Sigmoid colon (tissue), 7 donors: ENCODE measurements at regions of chr12 and their contacts with region 1.

Region 1: GRCh38 chr12:122064025-122064777 is 14.4 kb upstream of the MLXIP start:
- DNase-seq: peak; percentile 99
- H3K4me3 ChIP-seq: peak overlapping the region; percentile 9 to 43 (median 30)
- H3K27ac ChIP-seq: peak overlapping the region; percentile 78 to 96 (median 93)
- H3K4me1 ChIP-seq: peaks cover 0 to 99% (median 94%) of the 10 kb centered on the region in 4 donors
- H3K27me3 ChIP-seq: no peaks in the 10 kb centered on the region
- CTCF ChIP-seq: peak in 2 of 4 experiments; percentile 61 to 62
- EP300 ChIP-seq: peak in 3 of 4 donors; percentile 53 to 77 (median 64)
- POLR2A ChIP-seq: no peak

Region 2: DNA sequence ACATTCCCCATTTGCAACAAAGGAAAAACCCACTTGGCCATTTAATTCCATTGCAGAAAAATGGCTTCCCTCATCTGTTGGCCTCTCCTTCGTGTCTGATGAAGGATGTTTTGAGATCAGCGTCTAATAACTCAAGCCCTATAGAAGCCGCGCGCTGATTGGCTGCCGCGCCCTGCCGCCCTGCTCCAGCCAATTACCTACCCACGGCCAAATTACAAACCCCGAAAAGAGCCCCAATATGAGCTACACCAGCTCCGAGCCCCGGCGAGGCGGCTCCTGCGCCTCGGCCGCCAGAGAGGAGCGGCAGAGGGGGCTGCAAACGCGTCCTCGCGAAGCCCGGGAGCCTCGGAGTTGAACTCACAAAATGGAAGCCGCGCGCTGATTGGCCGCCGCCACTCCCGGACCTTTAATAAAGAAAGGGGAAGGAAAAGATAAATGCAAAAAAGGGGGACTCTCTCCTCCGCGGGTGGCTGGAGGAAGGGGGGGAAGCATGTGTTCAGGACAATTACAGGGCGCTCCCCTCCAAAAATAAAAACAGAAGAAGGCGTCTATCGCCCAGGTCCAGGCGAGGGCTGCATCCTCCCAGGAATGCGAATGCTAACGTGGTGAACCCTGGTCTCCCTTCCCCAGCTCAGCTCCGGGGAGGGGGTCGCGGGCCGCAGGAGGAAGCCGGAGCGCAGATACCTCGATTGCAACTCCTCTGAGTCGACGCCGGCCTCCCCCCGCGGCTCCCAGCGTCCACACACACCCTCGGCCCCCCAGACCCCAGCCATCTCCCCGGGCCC is 261.2 kb before region 1 on chr12:
- intact Hi-C with region 1: loop called (anchors 10 kb)
- DNase-seq: peak; percentile 96
- H3K4me3 ChIP-seq: peak overlapping the region; percentile 63 to 81 (median 78)
- H3K27ac ChIP-seq: peak overlapping the region; percentile 100
- H3K4me1 ChIP-seq: peaks cover 0 to 50% (median 46%) of the 10 kb centered on the region in 4 donors
- H3K27me3 ChIP-seq: no peaks in the 10 kb centered on the region
- CTCF ChIP-seq: no peak
- EP300 ChIP-seq: no peak
- POLR2A ChIP-seq: peak; percentile 97 to 99

Region 3: DNA sequence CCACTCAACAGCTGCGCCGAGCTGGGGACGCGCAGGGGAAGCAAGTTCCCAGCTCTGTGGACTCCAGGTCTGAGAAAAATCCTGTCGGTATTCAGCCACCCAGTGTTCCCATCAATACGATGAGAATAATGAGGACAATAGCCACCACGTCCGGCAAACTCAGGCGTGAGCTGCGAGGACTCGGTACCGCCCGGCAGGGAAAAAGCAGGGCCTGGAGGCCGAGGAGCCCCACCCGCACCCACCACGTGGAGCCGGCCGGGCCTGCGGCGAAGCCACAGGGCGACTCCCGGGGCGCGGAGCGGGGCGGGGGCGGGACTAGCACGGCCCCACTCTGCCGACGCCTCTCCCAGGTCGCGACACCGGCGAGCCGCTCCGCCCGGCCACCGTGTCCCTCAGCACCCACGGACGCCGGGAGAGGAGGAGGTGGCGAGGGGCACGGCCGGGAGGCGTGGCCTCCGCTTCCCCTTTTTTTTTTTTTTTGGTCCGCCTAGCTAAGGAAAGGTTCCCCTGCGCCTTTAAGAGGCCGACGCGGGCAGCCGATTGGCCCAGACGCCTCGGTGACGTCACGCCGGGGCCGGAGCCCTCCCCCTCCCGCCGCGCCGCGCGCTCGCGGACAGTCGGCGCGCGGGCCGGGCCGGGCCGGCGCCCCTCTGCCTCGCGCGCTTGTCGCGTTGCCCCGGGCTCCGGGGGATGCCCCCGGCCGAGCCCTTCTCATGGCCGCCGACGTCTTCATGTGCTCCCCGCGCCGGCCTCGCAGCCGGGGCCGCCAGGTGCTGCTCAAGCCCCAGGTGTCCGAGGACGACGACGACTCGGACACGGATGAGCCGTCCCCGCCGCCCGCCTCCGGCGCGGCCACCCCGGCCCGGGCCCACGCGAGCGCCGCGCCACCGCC is 14.2 kb after region 1 on chr12 and contains the start of gene MLXIP:
- intact Hi-C with region 1: loop called (anchors 2 kb)
- DNase-seq: peak; percentile 98
- H3K4me3 ChIP-seq: peak within 1 kb of the TSS; percentile 77 to 94 (median 90)
- H3K27ac ChIP-seq: peak within 1 kb of the TSS; percentile 87 to 96 (median 90)
- H3K4me1 ChIP-seq: peaks cover 0 to 57% (median 37%) of the 10 kb centered on the region in 4 donors
- H3K27me3 ChIP-seq: no peaks in the 10 kb centered on the region
- CTCF ChIP-seq: no peak
- EP300 ChIP-seq: no peak
- POLR2A ChIP-seq: peak; percentile 18 to 61
- total RNA-seq, gene MLXIP: 32.9 to 87.5 (median 57.3) TPM

Region 4: DNA sequence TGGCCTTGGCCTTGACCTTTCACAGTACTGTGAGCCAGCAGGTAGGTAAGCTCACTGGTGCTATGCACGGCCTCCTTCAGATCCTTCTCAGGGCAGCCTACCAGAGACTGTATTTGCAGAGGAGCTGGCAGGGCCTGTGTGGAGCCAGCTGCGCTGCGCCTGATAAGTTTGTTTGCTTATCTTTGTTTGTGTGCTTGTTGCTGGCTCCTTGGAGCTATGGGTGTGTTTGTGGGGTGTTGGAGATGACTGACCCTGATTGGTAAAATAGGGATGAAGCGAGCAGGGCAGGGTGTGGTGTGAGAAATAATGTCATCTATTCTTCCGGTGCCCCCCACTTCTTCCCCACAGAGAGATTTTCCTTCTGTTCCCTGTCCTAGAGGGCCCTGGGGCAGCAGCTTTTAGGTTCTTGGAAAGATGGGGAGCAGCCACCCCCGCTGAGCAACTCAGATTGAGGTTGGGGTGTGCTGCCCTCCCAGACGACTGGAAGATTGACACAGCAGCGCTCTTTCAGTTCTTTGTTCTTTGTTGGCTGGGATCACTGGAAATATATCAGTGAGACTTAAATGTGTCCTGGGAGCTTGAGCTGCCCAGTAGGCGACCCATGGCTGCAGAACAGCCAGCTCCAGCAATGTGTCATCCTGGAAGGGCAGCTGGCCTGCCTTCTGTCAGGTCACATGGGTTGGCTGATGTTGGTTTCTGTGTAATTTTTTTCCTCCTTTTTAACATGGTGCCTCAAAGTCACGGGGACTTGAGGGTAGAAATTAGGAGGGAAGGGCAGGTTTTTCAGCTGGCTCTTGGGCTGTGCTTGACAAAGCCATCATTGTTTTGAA is 33.9 kb after region 1 on chr12:
- intact Hi-C with region 1: loop called (anchors 5 kb)
- DNase-seq: peak; percentile 91
- H3K4me3 ChIP-seq: peak overlapping the region in 1 of 4 donors; percentile 18
- H3K27ac ChIP-seq: peak overlapping the region; percentile 77 to 92 (median 86)
- H3K4me1 ChIP-seq: peaks cover 0 to 96% (median 94%) of the 10 kb centered on the region in 4 donors
- H3K27me3 ChIP-seq: no peaks in the 10 kb centered on the region
- CTCF ChIP-seq: no peak
- EP300 ChIP-seq: peak in 1 of 4 donors; percentile 32
- POLR2A ChIP-seq: no peak

Region 5: DNA sequence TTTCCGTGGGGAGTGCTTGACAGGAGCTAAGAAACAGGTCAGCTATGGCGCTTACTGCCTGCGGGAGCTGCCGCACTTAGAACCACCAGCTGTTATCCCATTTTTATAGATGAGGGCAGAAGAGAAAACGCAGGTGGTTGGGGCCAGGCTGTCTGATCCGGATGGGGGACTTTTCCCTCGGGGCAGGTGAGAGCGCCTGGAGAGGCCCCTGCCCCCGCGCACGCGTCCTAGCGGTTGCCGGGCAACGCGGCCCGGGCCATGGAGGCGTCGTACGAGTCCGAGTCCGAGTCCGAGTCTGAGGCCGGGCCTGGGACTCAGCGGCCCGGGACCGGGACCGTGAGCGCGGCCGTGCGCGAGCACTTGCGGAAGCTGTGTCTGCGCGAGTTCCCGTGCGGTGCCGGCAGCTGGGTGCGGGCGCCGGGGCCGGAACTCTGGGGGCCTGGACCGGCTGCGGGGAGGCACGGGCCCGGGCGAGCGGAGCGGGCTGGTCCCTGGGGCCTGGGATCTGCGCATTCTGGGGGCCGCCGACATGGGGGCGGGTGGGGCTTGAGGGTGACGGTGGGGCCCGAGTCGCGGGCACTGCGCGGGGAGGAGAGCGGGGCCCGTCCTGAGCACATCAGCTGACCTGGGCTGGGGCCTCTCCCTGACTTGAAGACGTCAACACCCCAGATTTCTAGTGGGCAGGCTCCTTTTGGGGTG is 118.8 kb after region 1 on chr12 and contains the start of gene LRRC43:
- intact Hi-C with region 1: no loop called
- DNase-seq: no peak
- H3K4me3 ChIP-seq: peak within 1 kb of the TSS; percentile 25 to 63 (median 52)
- H3K27ac ChIP-seq: peak within 1 kb of the TSS in 1 of 4 donors; percentile 22
- H3K4me1 ChIP-seq: peaks cover 0 to 11% (median 5%) of the 10 kb centered on the region in 4 donors
- H3K27me3 ChIP-seq: no peaks in the 10 kb centered on the region
- CTCF ChIP-seq: no peak
- EP300 ChIP-seq: no peak
- POLR2A ChIP-seq: no peak
- total RNA-seq, gene LRRC43: 0.54 to 4.4 (median 1.9) TPM in 3 of 4 donors, not detected in the other